Activated naive CD4-positive, alpha-beta T cell treated with anti-CD3 and anti-CD28 coated beads for 36 hours (primary cell): ENCODE measurements at regions of chr6 and their contacts with region 1.

Region 1: GRCh38 chr6:131532580-131533039 is 40.4 kb upstream of the ARG1 start:
- DNase-seq: peak; percentile 88
- H3K4me3 Mint-ChIP-seq: no peak overlapping the region
- H3K27ac Mint-ChIP-seq: peak overlapping the region; percentile 86
- H3K4me1 Mint-ChIP-seq: peaks cover 52% of the 10 kb centered on the region
- H3K27me3 Mint-ChIP-seq: no peaks in the 10 kb centered on the region

Region 2: DNA sequence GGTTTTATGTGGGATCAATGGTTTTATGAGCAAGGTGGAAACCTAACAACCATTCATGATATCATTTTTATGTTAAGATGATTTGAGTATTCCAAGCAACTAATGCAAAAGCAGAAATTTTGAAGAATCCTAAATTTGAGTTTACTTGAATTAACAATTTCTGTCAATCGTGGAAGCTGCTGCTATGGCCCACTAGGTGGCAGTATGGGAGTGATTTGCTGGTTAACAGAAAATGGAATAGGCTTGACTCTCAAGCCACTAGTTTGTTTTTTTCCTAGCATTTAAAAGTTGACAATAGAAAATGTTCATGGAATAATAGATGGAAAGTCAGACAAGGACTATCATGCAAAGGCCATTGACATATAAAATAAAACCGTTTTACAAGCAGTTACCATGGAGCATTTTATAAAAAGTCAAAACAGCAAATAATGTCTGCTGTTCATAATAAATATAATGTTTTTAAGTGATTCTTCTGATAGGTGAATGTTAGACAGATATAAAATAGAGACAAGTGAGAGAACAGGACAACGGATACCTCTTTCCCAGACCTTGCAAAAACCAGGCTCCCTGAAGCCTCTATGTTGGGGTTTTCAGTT is 1209.8 kb before region 1 on chr6:
- CTCF ChIA-PET with region 1: no interaction called
- intact Hi-C with region 1: loop called (anchors 5 kb)
- DNase-seq: peak; percentile 69
- H3K4me3 Mint-ChIP-seq: no peak overlapping the region
- H3K27ac Mint-ChIP-seq: no peak overlapping the region
- H3K4me1 Mint-ChIP-seq: no peaks in the 10 kb centered on the region
- H3K27me3 Mint-ChIP-seq: no peaks in the 10 kb centered on the region

Region 3: DNA sequence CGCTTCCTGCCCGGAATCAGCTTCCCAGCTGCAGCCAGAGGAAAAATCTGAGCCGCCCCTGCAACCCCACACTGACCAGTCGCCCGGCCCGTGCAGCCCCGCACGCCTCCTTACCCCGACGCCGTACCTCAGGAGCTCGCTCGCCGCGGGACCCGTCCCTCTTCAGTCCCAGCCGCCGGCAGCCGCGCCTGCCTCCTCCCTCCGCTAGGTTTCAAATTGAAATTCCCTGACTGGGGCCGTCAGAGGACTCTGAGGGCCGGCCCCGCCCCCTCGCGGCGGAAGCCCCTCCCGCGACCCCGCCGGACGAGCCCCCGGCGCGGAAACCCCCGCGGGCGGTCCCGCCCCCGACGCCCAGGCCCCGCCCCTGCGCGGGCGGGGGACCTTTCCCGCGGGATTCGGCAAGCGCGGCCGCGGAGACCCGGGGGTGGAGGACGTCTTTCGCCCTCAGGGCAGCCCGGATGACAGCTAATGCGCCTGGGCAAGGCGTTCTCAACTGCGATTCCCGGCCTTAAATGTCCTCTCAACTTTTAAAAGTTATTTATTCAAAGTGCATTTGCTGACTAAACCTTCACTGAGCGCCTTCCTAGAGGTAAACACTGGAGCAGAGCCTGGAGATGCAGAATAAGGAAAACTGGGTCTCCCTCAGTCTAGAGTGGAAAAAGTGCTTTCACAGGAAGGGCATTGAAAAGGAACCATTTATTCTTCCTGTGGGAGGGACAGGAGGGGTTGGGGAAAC is 469.4 kb before region 1 on chr6 and contains the start of gene EPB41L2:
- CTCF ChIA-PET with region 1: no interaction called
- intact Hi-C with region 1: loop called (anchors 2 kb)
- DNase-seq: peak; percentile 80
- H3K4me3 Mint-ChIP-seq: peak within 1 kb of the TSS; percentile 80
- H3K27ac Mint-ChIP-seq: no peak within 1 kb of the TSS
- H3K4me1 Mint-ChIP-seq: peaks cover 22% of the 10 kb centered on the region
- H3K27me3 Mint-ChIP-seq: peaks cover 2% of the 10 kb centered on the region
- total RNA-seq, gene EPB41L2: 33.5 to 37.7 TPM

Region 4: DNA sequence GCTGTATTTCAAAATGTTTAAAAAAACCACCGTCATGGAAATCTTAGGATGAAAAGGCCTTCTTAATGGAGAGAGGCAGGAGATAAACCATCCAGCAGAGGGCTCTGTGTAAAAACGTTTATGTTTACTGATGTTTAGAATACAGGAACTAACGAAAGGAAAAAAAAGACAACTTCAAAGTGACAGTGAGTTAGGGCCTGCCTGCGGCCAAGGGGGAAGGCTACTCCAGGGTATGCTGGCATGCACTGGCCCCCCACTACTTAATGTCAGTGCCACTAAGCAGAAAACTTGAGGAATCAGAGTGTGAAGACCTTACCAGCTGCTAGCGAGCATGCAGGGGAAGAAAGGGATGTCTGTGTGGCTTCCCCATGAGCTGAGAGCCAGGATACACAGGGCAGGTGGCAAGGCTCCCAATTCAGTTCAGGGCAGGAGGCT is 349.6 kb before region 1 on chr6:
- CTCF ChIA-PET with region 1: interaction called, 45 read pairs
- intact Hi-C with region 1: loop called (anchors 1 kb)
- DNase-seq: peak; percentile 35
- H3K4me3 Mint-ChIP-seq: peak overlapping the region; percentile 5
- H3K27ac Mint-ChIP-seq: no peak overlapping the region
- H3K4me1 Mint-ChIP-seq: peaks cover 8% of the 10 kb centered on the region
- H3K27me3 Mint-ChIP-seq: no peaks in the 10 kb centered on the region

Region 5: GRCh38 chr6:131269565-131270391 is 262.8 kb before region 1 on chr6:
- CTCF ChIA-PET with region 1: no interaction called
- intact Hi-C with region 1: loop called (anchors 1 kb)
- DNase-seq: peak; percentile 26
- H3K4me3 Mint-ChIP-seq: no peak overlapping the region
- H3K27ac Mint-ChIP-seq: peak overlapping the region; percentile 67
- H3K4me1 Mint-ChIP-seq: peaks cover 42% of the 10 kb centered on the region
- H3K27me3 Mint-ChIP-seq: no peaks in the 10 kb centered on the region

Region 6: GRCh38 chr6:131317516-131317915 is 215.1 kb before region 1 on chr6:
- CTCF ChIA-PET with region 1: no interaction called
- intact Hi-C with region 1: no loop called
- DNase-seq: no peak
- H3K4me3 Mint-ChIP-seq: no peak overlapping the region
- H3K27ac Mint-ChIP-seq: no peak overlapping the region
- H3K4me1 Mint-ChIP-seq: no peaks in the 10 kb centered on the region
- H3K27me3 Mint-ChIP-seq: no peaks in the 10 kb centered on the region

Region 7: DNA sequence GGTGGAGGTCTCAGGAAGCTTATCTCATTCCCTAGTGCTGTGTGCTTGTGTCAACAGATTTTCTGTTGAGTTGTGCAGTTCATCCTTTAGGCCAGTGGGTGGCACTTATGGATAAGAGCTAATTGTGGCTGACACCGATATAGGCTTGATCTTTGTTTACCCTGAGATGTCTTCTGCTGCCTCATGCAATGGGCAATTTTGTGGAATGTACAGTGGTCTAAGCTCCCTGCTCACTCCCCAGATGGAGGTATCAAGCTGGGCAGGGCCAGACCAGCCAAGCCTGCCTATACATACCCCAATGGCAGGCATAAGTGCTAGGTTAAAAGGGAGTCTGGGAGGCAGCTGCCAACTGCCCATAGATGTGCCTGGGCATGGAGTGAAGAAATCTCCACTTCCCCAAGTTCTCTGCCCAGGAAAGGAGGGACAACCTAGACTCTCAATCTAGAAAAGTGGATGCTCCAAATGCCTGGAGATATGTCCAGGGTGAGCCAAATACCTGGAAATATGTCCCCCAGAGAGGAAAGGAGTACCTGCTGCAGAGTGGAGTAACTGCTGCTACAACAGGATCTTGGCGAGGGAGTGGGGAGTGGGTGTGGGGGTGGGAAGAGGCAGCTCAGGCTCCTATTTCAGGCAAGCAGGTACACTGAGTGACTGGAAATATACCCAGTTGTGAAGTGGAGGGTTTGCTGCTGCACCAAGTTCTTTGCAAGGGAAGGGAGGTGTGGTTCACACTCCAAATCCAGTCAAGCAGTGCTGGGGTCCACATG is 12.8 kb before region 1 on chr6:
- CTCF ChIA-PET with region 1: interaction called, 82 read pairs
- intact Hi-C with region 1: loop called (anchors 1 kb)
- DNase-seq: peak; percentile 76
- H3K4me3 Mint-ChIP-seq: no peak overlapping the region
- H3K27ac Mint-ChIP-seq: peak overlapping the region; percentile 24
- H3K4me1 Mint-ChIP-seq: peaks cover 13% of the 10 kb centered on the region
- H3K27me3 Mint-ChIP-seq: no peaks in the 10 kb centered on the region